Activated CD4-positive, alpha-beta memory T cell treated with anti-CD3 and anti-CD28 coated beads for 36 hours (primary cell): ENCODE measurements at regions of chr2 and their contacts with region 1.

Region 1: GRCh38 chr2:158024288-158024898 is 77.3 kb upstream of the UPP2 start:
- DNase-seq: peak; percentile 73
- H3K4me3 Mint-ChIP-seq: no peak overlapping the region
- H3K27ac Mint-ChIP-seq: no peak overlapping the region
- H3K4me1 Mint-ChIP-seq: peaks cover 2% of the 10 kb centered on the region
- H3K27me3 Mint-ChIP-seq: no peaks in the 10 kb centered on the region

Region 2: DNA sequence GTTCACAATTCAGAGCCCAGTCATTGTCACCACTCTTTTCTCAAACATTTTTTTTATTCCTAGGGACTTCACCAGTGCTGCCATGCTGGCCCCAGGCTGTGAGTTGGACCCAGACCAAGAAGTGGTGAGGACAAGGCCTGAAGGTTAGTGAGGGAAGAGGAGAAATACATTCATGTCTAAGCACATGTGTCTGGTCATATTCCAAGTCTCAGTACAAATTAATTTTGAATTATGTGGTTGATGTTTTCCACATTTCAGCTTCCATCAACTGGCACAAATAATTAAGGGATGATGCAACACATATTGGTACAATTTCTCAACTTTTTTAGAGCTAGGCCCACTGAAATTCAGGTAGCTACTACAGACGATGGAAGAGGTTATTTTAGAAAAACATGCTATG is 29.3 kb before region 1 on chr2:
- CTCF ChIA-PET with region 1: interaction called, 11 read pairs
- POLR2A ChIA-PET with region 1: no interaction called
- intact Hi-C with region 1: no loop called
- DNase-seq: no peak
- H3K4me3 Mint-ChIP-seq: no peak overlapping the region
- H3K27ac Mint-ChIP-seq: no peak overlapping the region
- H3K4me1 Mint-ChIP-seq: no peaks in the 10 kb centered on the region
- H3K27me3 Mint-ChIP-seq: no peaks in the 10 kb centered on the region

Region 3: DNA sequence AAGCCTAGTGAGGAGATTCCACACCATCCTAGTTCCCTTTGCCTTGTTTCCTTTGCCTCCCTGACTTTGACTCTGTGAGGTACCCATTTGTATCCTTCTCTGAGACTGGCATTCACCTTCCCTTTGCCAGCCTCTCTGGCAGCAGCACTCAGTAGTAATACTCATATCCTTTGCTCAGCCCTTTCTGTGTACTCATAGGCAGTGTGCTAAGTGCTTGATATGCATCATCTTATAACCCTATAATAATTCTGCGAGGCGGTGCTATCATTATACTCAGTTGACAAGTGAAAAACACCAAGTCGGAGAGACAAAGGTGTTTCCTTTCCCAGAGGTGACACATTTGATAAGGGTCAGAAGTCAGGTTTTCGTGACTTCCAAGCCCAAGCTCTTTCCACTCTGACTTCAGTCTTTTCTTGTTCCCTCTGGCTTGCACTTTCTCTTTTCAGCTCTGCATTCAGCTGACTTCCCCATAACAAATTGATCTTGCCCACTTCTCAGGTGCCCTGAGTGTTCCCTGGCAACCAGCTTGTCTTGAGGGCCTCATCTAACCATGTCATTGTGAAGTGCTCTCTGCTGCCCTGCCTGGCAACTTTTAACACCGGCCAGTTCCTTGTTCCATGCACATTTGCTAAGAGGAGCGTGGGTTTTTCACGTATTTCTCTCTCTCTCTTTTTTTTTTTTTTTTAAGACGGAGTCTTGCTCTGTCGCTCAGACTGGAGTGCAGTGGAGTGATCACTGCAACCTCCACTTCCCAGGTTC is 17.3 kb before region 1 on chr2:
- CTCF ChIA-PET with region 1: interaction called, 47 read pairs
- POLR2A ChIA-PET with region 1: no interaction called
- intact Hi-C with region 1: no loop called
- DNase-seq: peak; percentile 25
- H3K4me3 Mint-ChIP-seq: no peak overlapping the region
- H3K27ac Mint-ChIP-seq: no peak overlapping the region
- H3K4me1 Mint-ChIP-seq: peaks cover 6% of the 10 kb centered on the region
- H3K27me3 Mint-ChIP-seq: peaks cover 2% of the 10 kb centered on the region

Region 4: DNA sequence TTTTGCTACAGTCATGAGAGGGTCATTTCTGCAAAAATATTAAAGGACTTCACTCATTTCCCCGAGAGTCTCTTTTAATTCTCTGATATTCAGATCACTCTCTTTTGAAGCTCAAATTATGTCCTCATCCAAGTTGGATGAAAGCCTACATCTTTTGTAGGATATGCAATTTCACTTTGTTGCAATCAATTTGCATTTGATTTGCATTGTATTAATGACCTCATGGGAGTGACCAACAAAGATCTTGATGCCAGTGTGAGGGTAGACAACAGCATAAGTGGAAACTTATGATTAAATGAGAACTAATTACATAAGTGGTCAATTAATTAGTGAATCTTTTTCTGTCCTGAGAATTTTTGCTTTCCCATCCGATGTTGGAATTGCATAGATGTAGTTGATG is 17.0 kb after region 1 on chr2:
- CTCF ChIA-PET with region 1: interaction called, 19 read pairs
- POLR2A ChIA-PET with region 1: no interaction called
- intact Hi-C with region 1: no loop called
- DNase-seq: no peak
- H3K4me3 Mint-ChIP-seq: no peak overlapping the region
- H3K27ac Mint-ChIP-seq: no peak overlapping the region
- H3K4me1 Mint-ChIP-seq: no peaks in the 10 kb centered on the region
- H3K27me3 Mint-ChIP-seq: peaks cover 13% of the 10 kb centered on the region

Region 5: DNA sequence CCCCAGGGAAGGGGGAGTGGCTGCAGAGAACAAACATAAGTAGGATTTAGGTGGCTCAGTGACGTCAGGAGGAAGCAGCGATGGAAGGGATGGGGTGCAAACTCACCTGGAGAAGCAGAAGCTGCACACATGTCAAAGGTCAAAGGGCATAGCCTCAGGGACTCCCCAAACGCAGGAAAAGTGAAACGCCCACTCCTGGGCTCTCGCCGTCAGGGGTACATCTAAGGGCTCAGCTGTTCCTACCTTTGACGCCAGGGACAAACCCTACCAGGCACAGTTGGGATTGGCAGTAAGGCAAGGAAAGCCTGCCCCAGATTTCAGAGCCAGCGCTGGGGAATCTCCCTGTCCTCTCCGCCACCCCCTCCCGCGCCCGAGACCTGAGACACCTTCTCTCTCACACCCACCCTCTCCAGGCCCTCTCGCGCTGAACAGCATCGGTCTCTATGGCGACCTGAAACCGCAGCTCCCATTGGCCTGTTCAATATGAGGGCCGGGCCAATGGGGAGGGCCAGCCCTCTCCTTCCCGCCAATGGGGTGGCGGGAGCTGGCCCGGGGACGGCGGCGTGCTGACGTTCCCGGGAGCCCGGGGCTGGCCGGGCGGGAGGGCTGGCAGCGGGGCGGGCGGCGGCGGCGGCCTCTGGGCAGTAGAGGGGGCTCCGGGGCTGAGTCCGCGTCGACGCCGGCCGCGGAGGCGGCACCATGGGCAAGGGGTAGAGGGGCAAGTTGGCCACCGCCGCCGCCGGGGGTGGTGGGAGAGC is 432.1 kb after region 1 on chr2 and contains the starts of genes CCDC148 and PKP4:
- CTCF ChIA-PET with region 1: interaction called, 3 read pairs
- POLR2A ChIA-PET with region 1: no interaction called
- intact Hi-C with region 1: loop called (anchors 10 kb)
- DNase-seq: peak; percentile 94
- H3K4me3 Mint-ChIP-seq: peak within 1 kb of the TSS; percentile 93
- H3K27ac Mint-ChIP-seq: peak within 1 kb of the TSS; percentile 72
- H3K4me1 Mint-ChIP-seq: peaks cover 28% of the 10 kb centered on the region
- H3K27me3 Mint-ChIP-seq: no peaks in the 10 kb centered on the region
- total RNA-seq, gene CCDC148: 0.29 TPM in 1 of 2 experiments, not detected in the other
- total RNA-seq, gene PKP4: 41.4 to 43.1 TPM

Region 6: DNA sequence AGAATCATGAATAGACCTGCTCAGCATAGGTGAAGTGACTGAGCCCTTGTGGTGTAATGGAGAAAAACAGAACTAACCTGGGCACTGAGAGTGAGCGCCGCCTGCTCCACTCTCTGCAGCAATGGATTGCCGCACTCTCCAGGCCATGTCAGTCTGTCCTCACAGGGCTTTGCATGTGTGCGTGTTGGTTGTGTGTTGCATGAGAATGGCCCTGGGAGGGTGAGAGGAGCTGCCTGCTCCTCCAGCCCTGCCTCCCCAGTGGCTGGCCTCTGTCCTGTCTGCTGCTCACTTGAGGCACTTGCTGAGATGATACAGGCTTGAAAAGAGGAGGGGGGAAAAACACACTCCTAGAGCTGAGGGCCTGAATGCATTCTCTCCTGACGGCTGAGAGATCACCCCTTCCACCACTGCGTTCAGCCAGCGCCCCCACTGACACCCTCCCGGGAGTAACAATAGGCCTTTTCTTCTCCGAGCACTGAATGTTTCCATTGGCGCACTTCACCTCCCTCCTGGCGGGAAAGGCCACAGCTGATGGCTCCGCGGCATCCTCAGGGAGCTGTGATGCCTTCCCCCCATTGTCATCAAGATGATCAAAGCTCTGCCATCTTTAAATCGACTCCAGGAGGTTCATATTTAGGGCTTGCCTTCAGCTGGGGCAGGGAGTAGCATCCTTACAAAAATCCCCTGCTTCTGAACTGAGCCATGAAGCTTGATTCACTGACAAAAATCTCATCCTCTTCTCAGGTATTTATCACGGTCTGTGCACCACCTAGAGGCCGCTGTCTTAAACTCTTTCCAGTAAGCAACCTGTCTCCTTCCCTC is 720.9 kb after region 1 on chr2:
- CTCF ChIA-PET with region 1: interaction called, 196 read pairs
- POLR2A ChIA-PET with region 1: no interaction called
- intact Hi-C with region 1: loop called (anchors 2 kb)
- DNase-seq: peak; percentile 55
- H3K4me3 Mint-ChIP-seq: no peak overlapping the region
- H3K27ac Mint-ChIP-seq: no peak overlapping the region
- H3K4me1 Mint-ChIP-seq: no peaks in the 10 kb centered on the region
- H3K27me3 Mint-ChIP-seq: peaks cover 25% of the 10 kb centered on the region

Region 7: DNA sequence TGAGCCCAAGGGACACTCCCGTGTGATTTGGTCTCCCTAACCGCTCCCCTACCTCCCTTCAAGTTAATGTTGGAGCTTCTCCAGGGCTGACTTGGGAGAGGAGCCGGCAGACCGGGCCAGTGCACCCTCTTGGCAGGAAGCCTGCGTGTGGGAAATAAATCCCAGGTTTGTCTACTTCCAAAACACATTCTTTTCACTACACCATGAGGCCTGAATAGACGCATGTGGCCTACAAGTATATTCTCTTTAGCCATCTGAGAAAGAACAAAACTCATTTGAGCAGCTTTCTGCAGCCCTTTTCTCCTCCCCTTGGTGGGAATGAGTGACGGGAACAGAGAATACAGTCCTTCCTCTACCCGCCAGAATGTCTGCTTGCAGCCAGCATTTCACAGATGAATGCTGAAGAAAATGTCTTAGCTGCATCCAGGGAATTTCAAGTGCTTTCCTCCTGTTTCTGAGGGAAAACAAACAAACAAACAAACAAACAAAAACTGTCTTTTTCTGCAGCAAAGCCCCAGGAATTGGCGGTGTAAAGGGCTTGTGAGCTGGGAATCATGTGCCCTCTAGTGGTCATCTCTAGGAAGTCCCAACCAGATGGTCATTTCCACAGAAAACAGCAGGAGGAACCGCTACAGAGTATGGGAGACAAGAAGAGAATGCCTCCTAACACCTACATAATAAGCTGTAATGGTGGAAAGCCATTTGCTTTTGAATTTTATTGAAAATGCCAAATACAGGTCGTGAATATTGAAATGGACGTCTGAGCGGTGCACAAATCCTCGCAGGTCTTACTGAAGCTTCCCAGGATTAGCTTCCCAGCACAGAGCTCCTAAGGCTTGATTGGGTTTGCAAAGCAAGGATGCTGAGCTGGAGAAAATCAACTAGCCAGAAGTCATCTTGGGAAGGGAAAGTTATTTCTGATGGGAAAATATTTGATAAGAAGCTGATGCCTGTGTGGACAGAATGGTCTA is 729.5 kb after region 1 on chr2:
- CTCF ChIA-PET with region 1: interaction called, 196 read pairs
- POLR2A ChIA-PET with region 1: no interaction called
- intact Hi-C with region 1: loop called (anchors 2 kb)
- DNase-seq: peak; percentile 21
- H3K4me3 Mint-ChIP-seq: no peak overlapping the region
- H3K27ac Mint-ChIP-seq: no peak overlapping the region
- H3K4me1 Mint-ChIP-seq: no peaks in the 10 kb centered on the region
- H3K27me3 Mint-ChIP-seq: peaks cover 6% of the 10 kb centered on the region